Heart left ventricle (tissue), 16 donors: ENCODE measurements at regions of chr1 and their contacts with region 1.

Region 1: GRCh38 chr1:119647734-119648619 is at the start of gene ZNF697:
- DNase-seq: peak; percentile 98 to 99 (median 98)
- ATAC-seq: peak; percentile 97 to 98 (median 98)
- H3K4me3 ChIP-seq: peak within 1 kb of the TSS; percentile 58 to 99 (median 94)
- H3K27ac ChIP-seq: peak within 1 kb of the TSS; percentile 78 to 97 (median 91)
- H3K4me1 ChIP-seq: peaks cover 0 to 38% (median 14%) of the 10 kb centered on the region in 12 donors
- H3K27me3 ChIP-seq: peaks cover 0 to 7% (median 0%) of the 10 kb centered on the region in 9 donors
- CTCF ChIP-seq: peak in 5 of 12 donors; percentile 18 to 29 (median 26)
- POLR2A ChIP-seq: peak in 1 of 2 donors; percentile 87
- total RNA-seq, gene ZNF697: 7.8 to 14.0 (median 10.9) TPM

Region 2: DNA sequence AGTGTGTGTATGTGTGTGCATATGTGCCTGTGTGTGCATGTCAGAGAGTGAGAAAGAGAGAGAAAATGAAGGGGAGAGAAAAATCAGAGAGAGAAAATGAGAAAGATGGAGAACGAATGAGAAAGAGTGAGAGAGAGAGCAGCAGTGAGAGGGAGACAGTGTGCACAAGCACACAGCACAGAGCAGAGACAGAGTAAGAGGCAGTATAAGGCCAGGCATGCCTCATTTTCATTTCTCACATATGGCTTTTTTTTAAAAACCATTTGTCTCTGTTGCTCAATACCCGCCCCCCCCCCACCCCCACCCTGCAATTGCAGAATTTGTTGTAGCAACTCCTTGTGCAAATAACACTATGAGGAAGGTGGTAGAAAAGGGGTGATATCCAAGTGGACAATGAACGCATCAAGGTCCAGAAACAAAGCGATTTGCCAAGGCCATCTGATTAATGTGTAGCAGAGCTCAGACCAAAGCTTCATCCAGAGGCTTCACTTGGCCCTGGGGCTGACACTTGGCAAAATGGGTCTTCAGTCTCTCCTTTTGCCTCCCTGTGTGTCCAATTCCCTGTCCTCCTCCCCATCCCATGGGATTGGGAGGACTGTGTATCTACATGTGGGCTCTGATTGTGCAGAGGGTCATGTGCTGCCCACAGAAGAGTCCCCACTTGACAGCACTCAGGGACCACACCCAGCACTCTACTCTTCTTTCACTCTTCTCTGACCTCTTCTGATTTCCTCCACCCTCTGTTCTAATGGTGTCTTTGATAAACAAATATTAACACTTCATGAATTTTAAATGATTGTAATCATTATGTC is 179.9 kb before region 1 on chr1:
- intact Hi-C with region 1: no loop called
- DNase-seq: no peak
- ATAC-seq: no peak
- H3K4me3 ChIP-seq: no peak overlapping the region
- H3K27ac ChIP-seq: no peak overlapping the region
- H3K4me1 ChIP-seq: no peaks in the 10 kb centered on the region
- H3K27me3 ChIP-seq: no peaks in the 10 kb centered on the region
- CTCF ChIP-seq: no peak
- POLR2A ChIP-seq: no peak

Region 3: DNA sequence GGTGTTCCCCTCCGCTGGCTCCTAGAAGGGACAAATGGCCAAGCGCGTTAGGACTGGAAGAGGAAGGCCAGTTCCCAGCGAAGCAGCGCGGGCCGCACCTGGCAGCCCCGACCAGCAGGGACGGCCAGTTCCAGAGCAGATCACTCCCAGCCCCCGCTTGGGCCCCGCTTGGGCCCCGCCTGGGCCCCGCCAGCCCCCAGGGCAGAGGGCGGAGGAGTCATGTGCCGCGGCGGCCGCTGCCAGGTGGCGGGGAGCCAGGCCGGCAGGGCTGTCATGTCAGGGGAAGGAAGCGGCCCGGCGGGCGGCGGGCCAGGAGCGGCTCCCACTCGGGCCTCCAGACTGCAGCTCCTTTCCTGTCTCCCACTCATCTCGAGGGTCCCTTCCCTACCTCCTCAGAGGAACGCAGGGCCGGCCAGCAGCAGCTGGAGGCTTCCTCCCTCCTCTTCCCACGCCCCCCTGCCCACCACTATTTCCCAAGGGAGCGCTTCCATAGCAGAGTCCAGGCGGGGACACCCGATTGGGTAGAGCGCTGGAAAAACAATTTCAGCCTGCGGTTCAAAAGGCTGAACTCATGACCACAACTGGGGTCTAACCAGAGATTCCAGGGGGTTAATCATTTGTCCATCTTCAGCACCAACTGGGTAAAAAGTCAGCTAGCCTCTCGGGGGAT is 16.4 kb before region 1 on chr1:
- intact Hi-C with region 1: loop called in 6 of 10 experiments (anchors 1 to 2 kb)
- DNase-seq: peak; percentile 93 to 96 (median 94)
- ATAC-seq: peak; percentile 88 to 95 (median 94)
- H3K4me3 ChIP-seq: peak overlapping the region in 11 of 12 donors; percentile 5 to 48 (median 36)
- H3K27ac ChIP-seq: peak overlapping the region; percentile 81 to 94 (median 88)
- H3K4me1 ChIP-seq: peaks cover 8 to 96% (median 74%) of the 10 kb centered on the region in 12 donors
- H3K27me3 ChIP-seq: no peaks in the 10 kb centered on the region
- CTCF ChIP-seq: no peak
- POLR2A ChIP-seq: peak in 1 of 2 donors; percentile 48

Region 4: GRCh38 chr1:119737040-119737682 is 89.2 kb after region 1 on chr1:
- intact Hi-C with region 1: no loop called
- DNase-seq: peak in 4 of 5 donors; percentile 35 to 71 (median 56)
- ATAC-seq: peak in 3 of 4 donors; percentile 27 to 67 (median 56)
- H3K4me3 ChIP-seq: no peak overlapping the region
- H3K27ac ChIP-seq: peak overlapping the region in 6 of 12 donors; percentile 27 to 62 (median 42)
- H3K4me1 ChIP-seq: peaks cover 0 to 34% (median 15%) of the 10 kb centered on the region in 12 donors
- H3K27me3 ChIP-seq: no peaks in the 10 kb centered on the region
- CTCF ChIP-seq: no peak
- POLR2A ChIP-seq: no peak